ENCODE measurements at regions of chr17 and their contacts with region 1.

Region 1: DNA sequence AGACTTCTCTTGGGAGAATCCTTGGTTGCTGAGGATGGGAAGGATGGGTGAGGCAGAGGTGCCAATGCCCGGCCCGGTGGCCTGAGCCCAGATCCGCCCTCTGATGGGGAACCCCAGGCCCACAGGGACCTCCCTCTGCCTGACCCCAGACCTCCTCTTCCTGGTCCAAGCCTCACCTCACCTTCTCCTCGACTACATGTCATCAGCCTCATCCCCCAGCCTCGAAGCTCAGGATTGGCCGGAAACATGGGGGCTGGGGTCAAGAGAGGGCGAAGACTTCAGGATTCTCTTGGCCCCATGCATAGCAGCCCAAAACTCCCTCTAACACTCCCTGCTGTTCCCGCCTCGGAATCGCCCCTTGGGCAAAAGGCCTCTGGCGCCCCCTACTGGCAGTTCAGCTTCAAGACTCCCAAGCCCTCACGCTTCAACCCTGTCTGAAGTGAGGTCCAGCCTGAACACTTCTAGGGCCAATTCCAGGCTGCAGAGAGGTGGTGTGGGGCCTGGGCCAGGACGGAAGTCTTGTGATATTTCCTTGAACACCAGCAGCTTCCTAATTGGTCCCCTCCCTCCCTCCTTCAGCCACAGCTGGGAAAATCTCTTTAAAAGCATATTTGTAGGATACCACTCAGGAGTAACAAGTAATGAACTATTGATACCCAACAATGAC is 47.2 kb downstream of the ARHGAP27 start:
- DNase-seq: peak; percentile 59
- ATAC-seq: peak; percentile 96
- H3K4me3 ChIP-seq: no peak overlapping the region
- H3K27ac ChIP-seq: peak overlapping the region; percentile 86
- H3K4me1 ChIP-seq: peaks cover 41% of the 10 kb centered on the region
- H3K27me3 ChIP-seq: no peaks in the 10 kb centered on the region
- CTCF ChIP-seq: peak; percentile 94

Region 2: GRCh38 chr17:45277216-45277849 is 108.1 kb before region 1 on chr17:
- CTCF ChIA-PET with region 1: interaction called, 5 read pairs
- POLR2A ChIA-PET with region 1: no interaction called
- in situ Hi-C with region 1: no loop called
- intact Hi-C with region 1: loop called (anchors 5 kb)
- DNase-seq: peak; percentile 54
- ATAC-seq: 0 out of 2 replicates have a peak, but pooled peaks have one; percentile 47
- H3K4me3 ChIP-seq: no peak overlapping the region
- H3K27ac ChIP-seq: peak overlapping the region; percentile 77
- H3K4me1 ChIP-seq: peaks cover 38% of the 10 kb centered on the region
- H3K27me3 ChIP-seq: no peaks in the 10 kb centered on the region
- CTCF ChIP-seq: peak; percentile 84

Region 3: GRCh38 chr17:45317112-45317928 is 68.1 kb before region 1 on chr17:
- CTCF ChIA-PET with region 1: interaction called, 5 read pairs
- POLR2A ChIA-PET with region 1: interaction called, 6 read pairs
- in situ Hi-C with region 1: no loop called
- intact Hi-C with region 1: loop called (anchors 5 kb)
- DNase-seq: peak; percentile 97
- ATAC-seq: peak; percentile 71
- H3K4me3 ChIP-seq: peak overlapping the region; percentile 69 to 94
- H3K27ac ChIP-seq: peak overlapping the region; percentile 99
- H3K4me1 ChIP-seq: peaks cover 55% of the 10 kb centered on the region
- H3K27me3 ChIP-seq: no peaks in the 10 kb centered on the region
- CTCF ChIP-seq: no peak